Tibial artery (tissue), 4 donors: ENCODE measurements at regions of chr10 and their contacts with region 1.

Region 1: GRCh38 chr10:69644658-69645295 is 14.7 kb downstream of the FAM241B start:
- DNase-seq: peak in 1 of 2 donors; percentile 75
- H3K4me3 ChIP-seq: no peak overlapping the region
- H3K27ac ChIP-seq: no peak overlapping the region
- H3K4me1 ChIP-seq: peaks cover 0 to 4% (median 2%) of the 10 kb centered on the region in 4 donors
- H3K27me3 ChIP-seq: peaks cover 0 to 5% of the 10 kb centered on the region in 2 donors
- CTCF ChIP-seq: peak; percentile 90 to 93

Region 2: DNA sequence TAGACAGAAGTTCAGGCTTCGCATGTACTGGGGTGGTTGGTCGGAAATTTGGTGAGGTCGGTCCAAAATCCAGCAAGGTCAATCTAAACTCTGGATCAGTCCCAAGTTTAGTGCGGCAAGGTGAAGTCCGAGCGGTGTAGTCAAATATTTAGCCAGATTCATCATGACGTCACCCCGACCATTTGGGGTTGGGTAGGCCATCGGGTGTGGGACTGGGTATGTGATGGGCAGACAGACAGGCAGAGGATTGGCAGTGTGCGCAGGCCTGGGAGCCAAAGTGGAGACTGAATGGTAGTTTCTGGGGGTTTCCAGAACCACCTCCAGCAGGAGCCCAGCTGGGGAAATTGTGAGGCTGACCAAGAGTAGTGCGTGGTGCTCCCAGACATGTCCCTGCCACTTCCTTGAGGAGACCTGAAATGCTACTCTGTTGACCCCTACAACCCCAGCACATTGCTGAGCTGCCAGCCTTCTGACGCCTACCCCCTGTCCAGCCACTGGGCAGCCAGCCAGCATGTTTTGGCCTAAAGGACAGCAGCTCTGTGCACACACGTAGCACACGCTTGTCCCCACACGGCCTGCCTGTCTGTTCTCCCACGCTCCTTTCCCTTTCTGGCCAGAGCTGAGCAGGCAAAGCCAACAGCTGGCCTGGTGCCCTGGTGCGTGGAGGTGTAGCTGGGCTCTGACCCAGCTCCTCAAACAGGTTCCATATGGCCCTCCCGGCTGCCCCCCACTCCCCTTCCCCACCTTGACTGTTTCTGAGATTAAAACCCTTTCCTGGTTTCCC is 41.2 kb after region 1 on chr10:
- intact Hi-C with region 1: loop called (anchors 5 kb)
- DNase-seq: peak; percentile 51 to 93
- H3K4me3 ChIP-seq: no peak overlapping the region
- H3K27ac ChIP-seq: peak overlapping the region; percentile 73 to 81
- H3K4me1 ChIP-seq: peaks cover 0 to 44% (median 30%) of the 10 kb centered on the region in 4 donors
- H3K27me3 ChIP-seq: no peaks in the 10 kb centered on the region
- CTCF ChIP-seq: no peak

Region 3: GRCh38 chr10:69716711-69717560 is 72.2 kb after region 1 on chr10:
- intact Hi-C with region 1: loop called (anchors 2 kb)
- DNase-seq: no peak
- H3K4me3 ChIP-seq: no peak overlapping the region
- H3K27ac ChIP-seq: peak overlapping the region; percentile 71 to 85
- H3K4me1 ChIP-seq: peaks cover 0 to 37% (median 23%) of the 10 kb centered on the region in 4 donors
- H3K27me3 ChIP-seq: no peaks in the 10 kb centered on the region
- CTCF ChIP-seq: peak; percentile 75 to 77

Region 4: GRCh38 chr10:69757553-69758309 is 113.0 kb after region 1 on chr10:
- intact Hi-C with region 1: no loop called
- DNase-seq: peak; percentile 57 to 88
- H3K4me3 ChIP-seq: no peak overlapping the region
- H3K27ac ChIP-seq: peak overlapping the region; percentile 77 to 78
- H3K4me1 ChIP-seq: peaks cover 0 to 21% (median 15%) of the 10 kb centered on the region in 4 donors
- H3K27me3 ChIP-seq: no peaks in the 10 kb centered on the region
- CTCF ChIP-seq: no peak

Region 5: DNA sequence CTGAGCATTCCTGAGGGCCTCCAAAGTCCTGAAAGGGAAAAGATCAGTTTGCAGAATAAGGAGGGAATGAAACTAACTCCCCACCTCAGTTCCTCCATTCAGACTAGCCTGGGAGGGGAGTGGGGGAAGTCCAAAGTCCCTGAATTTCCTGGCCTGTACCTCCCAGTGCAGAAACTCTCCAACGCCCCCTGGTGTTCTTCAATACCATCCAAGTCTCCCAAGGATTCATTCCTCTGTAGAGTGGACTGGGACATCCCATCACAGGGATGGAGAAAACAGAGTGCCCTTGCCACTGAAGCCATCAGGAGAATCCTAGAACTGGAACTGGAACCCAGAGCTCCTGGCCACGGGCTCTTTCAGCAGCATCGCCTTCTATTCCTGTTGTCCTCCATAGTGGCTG is 155.3 kb after region 1 on chr10:
- intact Hi-C with region 1: loop called (anchors 5 kb)
- DNase-seq: peak in 1 of 2 donors; percentile 74
- H3K4me3 ChIP-seq: no peak overlapping the region
- H3K27ac ChIP-seq: peak overlapping the region; percentile 25 to 79
- H3K4me1 ChIP-seq: peaks cover 0 to 34% (median 28%) of the 10 kb centered on the region in 4 donors
- H3K27me3 ChIP-seq: no peaks in the 10 kb centered on the region
- CTCF ChIP-seq: peak; percentile 62 to 67

Region 6: DNA sequence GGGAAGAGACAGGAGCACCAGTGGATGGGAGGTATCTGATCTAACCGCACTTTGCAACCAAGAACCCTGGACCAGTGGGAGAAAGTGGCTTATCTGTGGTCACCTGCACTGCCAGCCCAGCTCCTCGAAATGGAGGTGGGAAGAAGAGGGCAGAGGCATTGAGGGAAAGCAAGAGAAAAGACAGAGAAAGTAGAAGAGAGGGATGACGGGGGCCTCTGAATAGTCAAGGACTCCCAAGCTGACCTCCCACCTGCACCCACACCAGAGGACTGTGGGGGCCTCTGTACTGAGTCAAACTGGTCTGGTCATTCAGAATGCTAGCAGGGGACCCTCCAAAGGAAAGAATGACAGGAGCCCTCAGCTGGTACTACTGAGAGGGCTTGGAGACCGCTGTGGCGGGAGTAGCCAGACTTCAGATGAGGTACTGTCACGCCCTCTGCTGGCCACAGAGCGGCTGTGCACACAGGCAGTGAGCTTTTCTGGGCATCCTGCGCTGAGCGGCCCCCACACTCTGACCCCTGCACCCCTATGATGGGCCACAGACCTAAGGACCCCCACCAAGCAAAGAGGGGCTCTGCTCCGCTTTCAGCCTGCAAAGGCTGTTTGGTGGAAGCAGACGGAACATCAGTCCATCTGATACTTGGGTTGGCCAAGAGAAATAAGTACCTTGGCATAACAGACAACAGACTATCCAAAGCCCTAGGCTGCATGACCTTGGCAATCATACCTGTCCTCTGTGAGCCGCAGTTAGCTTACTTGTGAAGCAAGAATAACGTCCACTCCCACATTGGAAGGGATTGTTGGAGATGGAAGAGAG is 269.8 kb after region 1 on chr10:
- intact Hi-C with region 1: loop called (anchors 2 kb)
- DNase-seq: peak; percentile 71 to 87
- H3K4me3 ChIP-seq: no peak overlapping the region
- H3K27ac ChIP-seq: no peak overlapping the region
- H3K4me1 ChIP-seq: peaks cover 0 to 55% (median 47%) of the 10 kb centered on the region in 4 donors
- H3K27me3 ChIP-seq: no peaks in the 10 kb centered on the region
- CTCF ChIP-seq: peak; percentile 96 to 97